ENCODE measurements at regions of chr13 and their contacts with region 1.

Region 1: GRCh38 chr13:59542303-59542702 is 621.4 kb downstream of the DIAPH3 start:
- DNase-seq: peak; percentile 95
- H3K4me3 ChIP-seq: no peak overlapping the region
- H3K27ac ChIP-seq: peak overlapping the region; percentile 92
- H3K4me1 ChIP-seq: peaks cover 53% of the 10 kb centered on the region
- H3K27me3 ChIP-seq: no peaks in the 10 kb centered on the region
- CTCF ChIP-seq: no peak

Region 2: GRCh38 chr13:59318320-59318930 is 223.9 kb before region 1 on chr13:
- CTCF ChIA-PET with region 1: no interaction called
- POLR2A ChIA-PET with region 1: no interaction called
- intact Hi-C with region 1: loop called (anchors 5 kb)
- DNase-seq: peak; percentile 93
- H3K4me3 ChIP-seq: no peak overlapping the region
- H3K27ac ChIP-seq: peak overlapping the region; percentile 24
- H3K4me1 ChIP-seq: peaks cover 32% of the 10 kb centered on the region
- H3K27me3 ChIP-seq: no peaks in the 10 kb centered on the region
- CTCF ChIP-seq: peak; percentile 88

Region 3: GRCh38 chr13:59750860-59751259 is 208.6 kb after region 1 on chr13:
- CTCF ChIA-PET with region 1: no interaction called
- POLR2A ChIA-PET with region 1: no interaction called
- intact Hi-C with region 1: loop called (anchors 1 kb)
- DNase-seq: peak; percentile 93
- H3K4me3 ChIP-seq: peak overlapping the region; percentile 35
- H3K27ac ChIP-seq: peak overlapping the region; percentile 76
- H3K4me1 ChIP-seq: peaks cover 73% of the 10 kb centered on the region
- H3K27me3 ChIP-seq: no peaks in the 10 kb centered on the region
- CTCF ChIP-seq: peak; percentile 29; the same call in 1 of the 2 replicates

Region 4: GRCh38 chr13:59906413-59907049 is 364.2 kb after region 1 on chr13:
- CTCF ChIA-PET with region 1: no interaction called
- POLR2A ChIA-PET with region 1: no interaction called
- intact Hi-C with region 1: loop called (anchors 5 kb)
- DNase-seq: peak; percentile 75
- H3K4me3 ChIP-seq: no peak overlapping the region
- H3K27ac ChIP-seq: peak overlapping the region; percentile 64
- H3K4me1 ChIP-seq: peaks cover 32% of the 10 kb centered on the region
- H3K27me3 ChIP-seq: no peaks in the 10 kb centered on the region
- CTCF ChIP-seq: peak; percentile 79

Region 5: DNA sequence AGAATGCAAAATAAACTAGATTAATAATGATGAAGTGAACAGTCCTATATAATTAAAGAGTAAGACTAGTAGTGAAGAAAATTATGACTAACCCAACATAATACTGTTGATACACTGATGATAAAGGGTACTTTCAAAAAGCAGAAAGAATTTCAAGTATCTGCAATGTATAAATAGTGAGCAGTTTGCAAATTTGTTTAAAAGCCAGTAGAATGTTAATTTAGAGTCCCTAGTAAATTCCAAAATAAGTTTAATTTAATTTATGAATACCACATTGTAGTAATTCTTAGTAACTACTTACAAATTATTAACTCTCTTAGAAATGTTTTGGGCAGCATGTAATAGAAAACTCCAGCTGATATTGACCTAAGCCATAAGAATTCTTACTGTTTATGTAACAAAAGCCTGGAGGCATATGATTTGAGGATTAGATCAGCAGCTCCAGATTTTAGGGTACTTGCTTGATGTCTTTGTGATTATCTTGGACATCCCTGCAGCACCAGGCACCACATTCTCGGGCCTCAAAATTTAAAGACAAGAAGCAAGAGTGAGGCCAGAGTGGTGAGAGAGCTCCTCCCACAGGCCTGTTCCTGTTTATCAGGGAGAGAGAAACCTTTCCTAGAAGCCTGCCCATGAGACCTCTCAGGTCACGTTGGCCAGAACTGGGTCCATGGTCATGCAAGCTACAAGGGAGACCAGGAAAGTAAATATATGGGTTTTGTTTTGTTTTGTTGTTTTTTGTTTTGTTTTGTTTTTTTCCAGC is 787.1 kb after region 1 on chr13:
- CTCF ChIA-PET with region 1: interaction called, 3 read pairs
- POLR2A ChIA-PET with region 1: no interaction called
- intact Hi-C with region 1: loop called (anchors 2 kb)
- DNase-seq: peak; percentile 93
- H3K4me3 ChIP-seq: no peak overlapping the region
- H3K27ac ChIP-seq: peak overlapping the region; percentile 91
- H3K4me1 ChIP-seq: peaks cover 58% of the 10 kb centered on the region
- H3K27me3 ChIP-seq: no peaks in the 10 kb centered on the region
- CTCF ChIP-seq: peak; percentile 84